ENCODE measurements at regions of chr6 and their contacts with region 1.

Region 1: DNA sequence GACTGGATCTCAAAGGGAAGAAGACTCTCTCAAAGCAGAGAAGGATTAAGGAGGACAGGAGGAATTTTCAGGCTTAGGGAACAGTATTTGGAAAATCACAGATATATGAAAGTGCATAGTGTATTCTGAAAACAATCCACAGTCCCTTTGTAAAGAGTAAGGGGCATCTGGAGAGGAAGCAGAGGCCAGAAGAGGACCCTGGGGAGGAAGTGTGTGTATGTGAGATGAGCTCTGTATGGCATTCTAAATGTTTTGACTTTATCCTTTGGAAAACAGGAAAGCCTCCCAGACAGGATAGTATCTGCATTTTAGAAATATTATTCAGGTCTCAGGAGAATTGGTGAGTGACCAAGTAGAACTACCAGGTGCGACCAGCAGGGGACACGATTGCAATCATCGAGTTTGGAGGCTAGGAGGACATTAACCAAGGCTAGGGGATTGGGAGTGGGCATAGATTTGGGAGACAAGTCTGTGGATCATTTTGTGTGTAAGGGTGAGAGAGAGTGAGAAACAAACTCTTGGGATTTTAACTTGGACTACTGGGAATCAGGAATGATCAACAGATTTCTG is 38.3 kb upstream of the FAM184A start:
- DNase-seq: no peak
- H3K4me3 ChIP-seq: no peak overlapping the region
- H3K27ac ChIP-seq: no peak overlapping the region
- H3K4me1 ChIP-seq: no peaks in the 10 kb centered on the region
- H3K27me3 ChIP-seq: no peaks in the 10 kb centered on the region
- CTCF ChIP-seq: peak; percentile 45
- EP300 ChIP-seq: no peak
- RAD21 ChIP-seq: no peak

Region 2: GRCh38 chr6:119129148-119129967 is 12.6 kb after region 1 on chr6:
- CTCF ChIA-PET with region 1: interaction called, 21 read pairs
- POLR2A ChIA-PET with region 1: no interaction called
- DNase-seq: peak; percentile 50
- H3K4me3 ChIP-seq: peak overlapping the region in 1 of 2 experiments; percentile 24; a peak in 2 of 4 replicates
- H3K27ac ChIP-seq: peak overlapping the region; percentile 67 to 94
- H3K4me1 ChIP-seq: peaks cover 18 to 21% of the 10 kb centered on the region in 2 experiments
- H3K27me3 ChIP-seq: no peaks in the 10 kb centered on the region
- CTCF ChIP-seq: peak; percentile 91
- EP300 ChIP-seq: no peak
- RAD21 ChIP-seq: peak; percentile 77